ENCODE measurements at regions of chr16 and their contacts with region 1.

Region 1: DNA sequence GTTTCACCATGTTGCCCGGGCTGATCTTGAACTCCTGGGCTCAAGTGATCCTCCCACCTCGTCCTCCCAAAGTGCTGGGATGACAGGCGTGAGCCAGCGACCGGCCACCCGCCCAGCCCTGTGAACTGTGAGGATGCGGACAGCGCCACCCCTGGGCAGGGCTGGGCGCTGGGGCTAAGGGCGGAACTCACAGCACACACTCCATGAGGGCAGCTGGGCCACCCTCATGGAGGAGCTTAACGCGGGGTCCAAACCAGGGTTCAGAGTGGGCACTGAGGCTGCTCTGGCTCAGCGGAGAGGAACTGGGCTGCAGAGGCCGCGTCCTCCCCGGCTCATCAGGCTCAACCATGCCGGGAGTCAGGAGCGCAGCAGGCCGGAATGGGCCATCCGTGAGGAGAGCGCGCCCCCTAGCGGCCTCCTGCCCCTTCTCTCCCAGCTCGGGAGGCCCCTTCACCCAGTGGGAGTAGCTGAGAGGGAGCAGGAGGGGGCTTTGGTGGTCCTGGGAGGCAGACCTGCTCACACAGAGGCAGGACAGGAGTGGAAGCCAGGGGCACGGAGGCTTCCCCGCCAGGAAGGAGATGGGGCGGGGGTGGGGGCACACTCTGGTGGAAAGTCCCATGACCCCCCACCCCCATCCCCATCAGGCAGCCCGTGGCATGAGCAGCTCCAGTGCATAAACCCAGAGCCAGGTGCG is 13.8 kb downstream of the CORO7 start:
- DNase-seq: peak; percentile 80 to 92 (median 84)
- ATAC-seq: peak; percentile 77 to 96 (median 94)
- H3K4me3 ChIP-seq: peak overlapping the region in 3 of 12 donors; percentile 2 to 31 (median 17)
- H3K27ac ChIP-seq: peak overlapping the region in 1 of 12 donors; percentile 27
- H3K4me1 ChIP-seq: peaks cover 0 to 9% (median 4%) of the 10 kb centered on the region in 12 donors
- H3K27me3 ChIP-seq: no peaks in the 10 kb centered on the region
- CTCF ChIP-seq: peak; percentile 82 to 94 (median 90)
- POLR2A ChIP-seq: no peak

Region 2: GRCh38 chr16:4200000-4200780 is 202.4 kb before region 1 on chr16:
- intact Hi-C with region 1: loop called in 2 of 10 experiments (anchors 5 to 10 kb)
- DNase-seq: peak; percentile 48 to 82 (median 60)
- ATAC-seq: peak; percentile 60 to 80 (median 68)
- H3K4me3 ChIP-seq: no peak overlapping the region
- H3K27ac ChIP-seq: peak overlapping the region in 3 of 12 donors; percentile 4 to 17 (median 7)
- H3K4me1 ChIP-seq: peaks cover 0 to 18% (median 6%) of the 10 kb centered on the region in 12 donors
- H3K27me3 ChIP-seq: no peaks in the 10 kb centered on the region
- CTCF ChIP-seq: peak; percentile 52 to 75 (median 66)
- POLR2A ChIP-seq: no peak

Region 3: GRCh38 chr16:4261557-4262172 is 140.9 kb before region 1 on chr16:
- intact Hi-C with region 1: loop called in 2 of 10 experiments (anchors 10 kb)
- DNase-seq: peak in 1 of 5 donors; percentile 60
- ATAC-seq: no peak
- H3K4me3 ChIP-seq: no peak overlapping the region
- H3K27ac ChIP-seq: no peak overlapping the region
- H3K4me1 ChIP-seq: peaks cover 0 to 30% (median 11%) of the 10 kb centered on the region in 12 donors
- H3K27me3 ChIP-seq: no peaks in the 10 kb centered on the region
- CTCF ChIP-seq: peak; percentile 47 to 78 (median 58)
- POLR2A ChIP-seq: no peak

Region 4: DNA sequence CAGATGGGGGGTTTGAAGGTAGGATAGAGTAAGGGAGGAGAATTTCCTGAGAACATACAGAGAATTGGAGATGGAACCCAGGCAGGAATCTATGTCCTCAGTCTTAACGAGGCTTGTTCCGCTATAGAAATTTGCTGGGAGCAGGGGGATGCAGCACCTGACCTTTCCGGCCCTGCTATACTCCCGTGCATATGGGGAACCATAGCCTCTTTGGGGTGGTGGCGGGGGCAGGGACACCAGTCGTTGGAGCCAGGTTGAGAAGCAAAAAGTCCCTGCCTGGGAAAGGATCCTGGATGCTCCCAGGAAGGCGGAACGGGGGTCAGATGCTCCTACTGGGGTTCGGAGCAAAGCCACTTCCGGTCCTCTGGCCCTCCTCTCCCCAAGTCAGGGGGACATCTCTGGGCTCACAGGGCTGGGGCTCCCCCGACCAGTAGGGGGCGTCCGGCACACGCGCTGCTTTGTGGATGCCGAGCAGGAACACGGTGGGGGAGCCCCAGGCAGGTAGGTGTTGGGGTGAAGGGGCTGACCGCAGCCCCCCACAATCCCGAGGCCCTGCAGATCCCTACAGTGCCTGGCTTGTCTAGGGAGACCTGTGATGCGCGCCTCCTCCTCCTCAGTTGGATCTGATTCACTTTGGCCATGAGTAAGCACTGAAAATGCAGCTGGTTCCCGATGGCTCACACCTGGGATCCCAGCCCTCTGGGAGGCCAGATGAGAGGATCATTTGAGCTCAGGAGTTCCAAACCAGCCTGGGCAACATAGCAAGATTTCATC is 114.3 kb before region 1 on chr16:
- intact Hi-C with region 1: loop called in 7 of 10 experiments (anchors 2 to 10 kb)
- DNase-seq: peak; percentile 73 to 91 (median 78)
- ATAC-seq: peak in 3 of 4 donors; percentile 78 to 81 (median 78)
- H3K4me3 ChIP-seq: peak overlapping the region in 1 of 12 donors; percentile 13
- H3K27ac ChIP-seq: no peak overlapping the region
- H3K4me1 ChIP-seq: peaks cover 5 to 25% (median 17%) of the 10 kb centered on the region in 12 donors
- H3K27me3 ChIP-seq: peaks cover 0 to 3% (median 0%) of the 10 kb centered on the region in 9 donors
- CTCF ChIP-seq: peak; percentile 91 to 99 (median 96)
- POLR2A ChIP-seq: no peak

Region 5: DNA sequence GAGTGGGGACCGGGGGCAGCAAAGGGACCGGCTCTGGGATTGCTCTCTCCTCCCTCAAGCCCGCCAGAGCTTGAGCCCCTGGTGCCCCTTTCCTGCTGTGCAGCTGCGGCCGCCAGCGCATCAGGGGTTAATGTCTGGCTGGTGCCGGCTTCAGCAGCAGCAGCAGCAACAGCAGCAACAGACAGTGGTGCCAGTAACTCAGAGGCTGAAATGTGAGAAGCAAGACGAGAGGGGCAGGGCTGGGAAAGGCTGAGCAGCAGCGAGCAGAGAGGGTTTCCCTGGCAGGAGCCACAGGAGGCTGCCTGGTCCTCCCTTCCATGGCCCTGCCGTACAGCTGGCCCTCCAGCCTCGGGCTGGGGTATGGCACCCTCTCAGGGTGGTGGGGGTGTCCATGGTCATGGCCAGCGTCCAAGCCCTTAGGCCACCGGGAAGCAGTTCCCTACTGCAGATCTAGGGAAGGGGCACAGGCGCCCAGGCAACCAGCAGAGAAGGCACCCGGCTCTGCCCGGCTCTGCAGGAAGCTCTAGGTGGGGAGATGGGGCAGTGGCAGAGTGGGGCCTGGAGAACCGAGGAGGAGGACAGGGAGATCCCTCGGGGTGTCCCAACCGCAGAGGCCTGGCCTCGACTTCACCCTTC is 108.6 kb before region 1 on chr16:
- intact Hi-C with region 1: loop called in 7 of 10 experiments (anchors 2 to 10 kb)
- DNase-seq: peak in 4 of 5 donors; percentile 52 to 75 (median 66)
- ATAC-seq: peak; percentile 74 to 91 (median 79)
- H3K4me3 ChIP-seq: peak overlapping the region in 5 of 12 donors; percentile 13 to 22 (median 14)
- H3K27ac ChIP-seq: peak overlapping the region in 9 of 12 donors; percentile 6 to 56 (median 30)
- H3K4me1 ChIP-seq: peaks cover 0 to 35% (median 26%) of the 10 kb centered on the region in 12 donors
- H3K27me3 ChIP-seq: no peaks in the 10 kb centered on the region
- CTCF ChIP-seq: no peak
- POLR2A ChIP-seq: no peak

Region 6: GRCh38 chr16:4358831-4359561 is 43.6 kb before region 1 on chr16:
- intact Hi-C with region 1: loop called (anchors 1 to 2 kb)
- DNase-seq: peak in 3 of 5 donors; percentile 57 to 83 (median 72)
- ATAC-seq: peak; percentile 44 to 78 (median 68)
- H3K4me3 ChIP-seq: no peak overlapping the region
- H3K27ac ChIP-seq: no peak overlapping the region
- H3K4me1 ChIP-seq: peaks cover 0 to 3% (median 0%) of the 10 kb centered on the region in 12 donors
- H3K27me3 ChIP-seq: no peaks in the 10 kb centered on the region
- CTCF ChIP-seq: peak; percentile 90 to 96 (median 92)
- POLR2A ChIP-seq: no peak

Measured in heart left ventricle (tissue), 16 donors.